Activated CD4-positive, alpha-beta memory T cell treated with anti-CD3 and anti-CD28 coated beads, Interleukin-2, amount 10 ng/mL, durations not matched to agents 7 days and 5 days (primary cell): ENCODE measurements at regions of chr5 and their contacts with region 1.

Region 1: DNA sequence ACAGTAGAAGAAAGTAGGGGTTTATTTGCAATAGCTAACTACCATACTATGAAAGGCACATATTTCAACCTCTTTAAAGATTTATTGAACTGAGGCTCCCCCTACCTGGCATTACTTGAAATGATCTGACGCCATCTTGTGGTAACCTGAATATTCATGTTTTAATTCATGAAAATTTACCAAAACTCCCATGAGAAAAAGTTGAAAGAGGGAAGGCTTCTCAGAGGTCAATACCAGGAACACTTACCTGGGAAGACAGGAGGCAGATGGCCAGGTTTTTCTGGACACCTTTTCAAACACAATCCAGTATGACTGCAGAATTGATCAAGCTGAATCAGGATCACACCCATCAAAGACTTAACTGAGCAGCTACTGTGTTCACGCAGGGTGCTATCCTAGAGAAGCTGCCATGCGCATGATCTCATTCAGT is 9.4 kb downstream of the PRELID2 start:
- DNase-seq: no peak
- H3K4me3 Mint-ChIP-seq: no peak overlapping the region
- H3K27ac Mint-ChIP-seq: no peak overlapping the region
- H3K4me1 Mint-ChIP-seq: peaks cover 15% of the 10 kb centered on the region
- H3K27me3 Mint-ChIP-seq: peaks cover 3% of the 10 kb centered on the region

Region 2: DNA sequence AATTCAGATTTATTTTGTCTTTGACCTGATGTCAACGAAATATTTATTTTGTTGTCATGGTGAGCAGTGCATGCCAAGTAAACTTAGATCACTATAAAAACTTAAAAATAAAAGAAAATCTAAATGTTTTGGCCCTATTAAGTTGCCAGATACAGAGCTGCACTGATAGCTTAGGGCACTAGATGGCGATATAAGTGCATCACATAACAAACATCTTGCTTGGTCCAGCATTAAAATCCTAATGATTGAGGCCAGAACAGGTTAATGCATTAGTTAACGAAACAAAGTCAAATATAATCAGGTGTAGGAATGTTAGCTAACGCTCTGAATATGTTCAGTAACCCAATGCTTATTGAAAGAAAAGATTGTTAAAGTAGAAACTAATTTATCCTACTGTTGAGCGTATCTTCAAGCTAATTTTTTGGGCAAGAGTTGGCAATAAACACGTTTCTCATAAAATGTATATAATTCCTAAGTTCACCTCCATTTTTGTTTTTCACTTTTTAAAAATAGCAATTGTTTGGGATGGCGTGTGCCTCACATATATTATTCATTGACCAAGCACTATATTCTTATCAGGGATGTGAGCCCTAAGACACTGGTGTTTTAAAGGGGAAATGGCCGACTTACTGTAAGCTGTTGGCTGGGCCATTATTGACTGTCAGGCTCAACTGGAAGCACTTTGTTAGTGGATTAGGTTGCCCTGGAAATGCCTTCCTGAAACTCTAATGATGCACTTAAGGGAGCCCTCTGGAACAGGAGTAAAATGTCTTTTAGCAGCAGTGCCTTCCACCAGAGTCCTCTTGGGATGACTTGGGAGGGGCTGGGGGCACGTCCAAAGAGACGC is 1621.8 kb before region 1 on chr5:
- CTCF ChIA-PET with region 1: interaction called, 20 read pairs
- POLR2A ChIA-PET with region 1: no interaction called
- DNase-seq: peak; percentile 23
- H3K4me3 Mint-ChIP-seq: no peak overlapping the region
- H3K27ac Mint-ChIP-seq: no peak overlapping the region
- H3K4me1 Mint-ChIP-seq: peaks cover 4% of the 10 kb centered on the region
- H3K27me3 Mint-ChIP-seq: peaks cover 56% of the 10 kb centered on the region

Region 3: DNA sequence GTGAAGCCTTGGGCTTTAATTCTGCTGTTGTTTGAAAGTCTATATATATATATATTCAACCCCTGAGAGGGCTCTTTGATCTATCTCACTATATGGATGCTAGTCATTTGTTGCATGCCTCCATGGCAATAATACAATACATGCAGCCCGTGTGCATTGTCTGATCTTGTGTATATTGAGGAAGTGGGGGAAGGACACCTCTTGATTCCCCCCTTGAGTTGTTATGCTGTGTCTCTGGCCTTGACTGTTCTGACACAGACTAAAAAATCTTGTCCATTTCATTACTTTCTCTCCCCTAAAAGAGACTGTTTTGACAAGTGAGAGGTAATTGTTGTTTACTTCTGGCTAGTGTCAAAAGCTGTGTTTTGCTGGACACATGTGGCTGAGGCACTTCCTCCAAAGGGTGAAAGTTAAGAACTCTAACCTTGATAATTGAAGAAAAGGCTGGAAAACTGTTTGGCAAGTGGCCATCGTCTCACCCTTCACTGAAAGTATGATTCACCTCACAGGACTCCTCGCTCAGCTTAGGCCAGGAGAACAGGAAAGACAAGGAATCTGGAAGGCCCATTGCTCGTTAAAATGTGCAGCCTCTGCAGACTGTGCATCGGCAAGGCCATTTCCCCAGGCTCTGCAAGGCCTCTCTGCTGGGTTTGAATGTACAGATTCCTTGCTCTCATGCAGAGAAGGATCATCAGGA is 294.6 kb before region 1 on chr5:
- CTCF ChIA-PET with region 1: no interaction called
- POLR2A ChIA-PET with region 1: no interaction called
- DNase-seq: no peak
- H3K4me3 Mint-ChIP-seq: no peak overlapping the region
- H3K27ac Mint-ChIP-seq: no peak overlapping the region
- H3K4me1 Mint-ChIP-seq: no peaks in the 10 kb centered on the region
- H3K27me3 Mint-ChIP-seq: no peaks in the 10 kb centered on the region

Region 4: GRCh38 chr5:145681686-145682085 is 144.1 kb before region 1 on chr5:
- CTCF ChIA-PET with region 1: interaction called, 13 read pairs
- POLR2A ChIA-PET with region 1: no interaction called
- DNase-seq: peak; percentile 36
- H3K4me3 Mint-ChIP-seq: no peak overlapping the region
- H3K27ac Mint-ChIP-seq: no peak overlapping the region
- H3K4me1 Mint-ChIP-seq: no peaks in the 10 kb centered on the region
- H3K27me3 Mint-ChIP-seq: no peaks in the 10 kb centered on the region

Region 5: GRCh38 chr5:145697251-145697990 is 128.3 kb before region 1 on chr5:
- CTCF ChIA-PET with region 1: interaction called, 19 read pairs
- POLR2A ChIA-PET with region 1: no interaction called
- DNase-seq: peak; percentile 34
- H3K4me3 Mint-ChIP-seq: no peak overlapping the region
- H3K27ac Mint-ChIP-seq: no peak overlapping the region
- H3K4me1 Mint-ChIP-seq: no peaks in the 10 kb centered on the region
- H3K27me3 Mint-ChIP-seq: no peaks in the 10 kb centered on the region

Region 6: DNA sequence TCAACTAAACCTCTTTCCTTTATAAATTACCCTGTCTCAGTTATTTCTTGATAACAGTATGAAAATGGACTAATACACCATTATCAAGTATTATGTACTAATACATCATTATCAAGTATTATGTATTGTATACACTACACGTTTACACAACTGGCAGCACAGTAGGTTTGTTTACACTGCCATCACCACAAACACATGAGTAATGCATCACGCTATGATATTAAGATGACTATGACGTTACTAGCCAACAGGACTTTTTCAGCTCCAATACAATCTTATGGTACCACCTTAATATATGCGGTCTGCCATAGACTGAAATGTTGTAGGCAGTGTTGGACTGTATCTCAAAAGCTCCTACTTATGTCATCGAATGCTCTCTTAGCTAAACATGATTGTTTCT is 18.9 kb before region 1 on chr5:
- CTCF ChIA-PET with region 1: interaction called, 10 read pairs
- POLR2A ChIA-PET with region 1: no interaction called
- DNase-seq: no peak
- H3K4me3 Mint-ChIP-seq: no peak overlapping the region
- H3K27ac Mint-ChIP-seq: no peak overlapping the region
- H3K4me1 Mint-ChIP-seq: no peaks in the 10 kb centered on the region
- H3K27me3 Mint-ChIP-seq: no peaks in the 10 kb centered on the region

Region 7: DNA sequence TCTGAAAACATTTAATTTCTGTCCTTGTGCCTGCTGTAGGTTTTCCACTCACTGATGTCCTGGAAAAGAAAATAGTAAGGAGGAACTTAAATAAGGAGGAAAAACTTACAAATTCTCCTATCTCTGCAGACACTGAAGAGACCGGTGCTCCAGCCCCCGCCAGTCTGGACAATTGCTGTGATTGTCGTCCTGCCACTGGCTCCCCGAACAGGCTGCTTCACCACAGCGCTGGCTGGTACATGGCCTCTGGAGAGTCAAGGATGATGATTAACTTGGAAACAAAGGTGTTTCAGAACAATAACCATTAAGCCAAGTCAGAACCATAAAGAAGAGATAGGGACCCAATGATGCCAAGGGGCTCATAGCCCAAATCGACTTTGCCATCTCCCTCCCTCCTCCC is 272.3 kb after region 1 on chr5:
- CTCF ChIA-PET with region 1: no interaction called
- POLR2A ChIA-PET with region 1: no interaction called
- DNase-seq: no peak
- H3K4me3 Mint-ChIP-seq: no peak overlapping the region
- H3K27ac Mint-ChIP-seq: no peak overlapping the region
- H3K4me1 Mint-ChIP-seq: no peaks in the 10 kb centered on the region
- H3K27me3 Mint-ChIP-seq: no peaks in the 10 kb centered on the region